ENCODE measurements at regions of chr1 and their contacts with region 1.

Region 1: DNA sequence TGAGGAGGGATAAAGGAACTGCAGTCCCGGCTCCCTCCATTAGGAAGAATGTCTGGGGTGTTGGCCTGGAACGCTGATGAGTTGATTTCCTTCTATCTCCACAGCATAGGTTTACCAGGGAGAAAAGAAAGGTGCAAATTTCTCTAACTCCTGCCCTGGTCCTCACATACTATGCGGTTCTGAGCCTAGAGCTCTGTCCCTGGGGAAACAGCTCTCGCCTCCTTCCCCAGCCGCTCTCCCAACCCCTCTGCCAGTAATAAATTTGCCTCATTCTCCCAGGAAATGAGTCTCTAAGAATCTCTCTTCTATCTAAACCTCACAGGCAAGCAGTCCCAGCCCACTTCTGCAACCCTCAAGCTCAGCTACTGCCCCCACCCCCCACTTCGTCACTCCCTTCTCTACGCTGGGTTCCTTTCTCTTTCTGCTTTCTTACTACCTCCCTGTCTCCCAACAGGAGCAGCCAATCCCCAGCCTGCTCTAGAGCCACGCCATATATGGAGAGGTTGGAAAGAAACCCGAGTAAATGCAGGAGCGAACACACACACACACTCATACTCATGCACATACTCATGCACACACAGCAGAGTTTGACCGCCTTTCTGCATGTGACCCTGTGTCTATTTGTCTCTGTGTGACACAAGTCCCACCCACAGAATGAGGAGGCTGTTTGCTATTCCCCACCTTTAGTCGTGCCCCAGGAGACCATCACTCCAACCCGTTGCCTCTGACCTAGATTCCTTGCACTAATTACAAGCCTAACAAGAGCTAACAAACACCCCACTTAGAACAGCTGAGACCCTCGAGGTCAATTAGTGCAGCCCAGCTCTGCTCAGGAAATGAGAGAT is 13.4 kb downstream of the PLEKHO1 start:
- DNase-seq: peak; percentile 34
- ATAC-seq: peak; percentile 28
- H3K4me3 Mint-ChIP-seq: peak overlapping the region; percentile 81
- H3K27ac Mint-ChIP-seq: peak overlapping the region; percentile 98
- H3K4me1 Mint-ChIP-seq: peaks cover 86% of the 10 kb centered on the region
- H3K27me3 Mint-ChIP-seq: no peaks in the 10 kb centered on the region
- CTCF ChIP-seq: no peak

Region 2: GRCh38 chr1:149899460-149900293 is 263.4 kb before region 1 on chr1 and contains the start of gene BOLA1:
- CTCF ChIA-PET with region 1: no interaction called
- POLR2A ChIA-PET with region 1: no interaction called
- intact Hi-C with region 1: loop called (anchors 10 kb)
- DNase-seq: peak; percentile 69
- ATAC-seq: peak; percentile 99
- H3K4me3 Mint-ChIP-seq: peak within 1 kb of the TSS; percentile 92
- H3K27ac Mint-ChIP-seq: peak within 1 kb of the TSS; percentile 86
- H3K4me1 Mint-ChIP-seq: peaks cover 20% of the 10 kb centered on the region
- H3K27me3 Mint-ChIP-seq: no peaks in the 10 kb centered on the region
- CTCF ChIP-seq: no peak
- total RNA-seq, gene BOLA1: 10.2 and 11.6 TPM in 2 replicates

Region 3: GRCh38 chr1:150067184-150068036 is 95.7 kb before region 1 on chr1 and contains the start of gene VPS45:
- CTCF ChIA-PET with region 1: interaction called, 166 read pairs
- POLR2A ChIA-PET with region 1: interaction called, 38 read pairs
- intact Hi-C with region 1: loop called (anchors 2 kb)
- DNase-seq: peak; percentile 71
- ATAC-seq: peak; percentile 86
- H3K4me3 Mint-ChIP-seq: peak within 1 kb of the TSS; percentile 95
- H3K27ac Mint-ChIP-seq: peak within 1 kb of the TSS; percentile 95
- H3K4me1 Mint-ChIP-seq: peaks cover 31% of the 10 kb centered on the region
- H3K27me3 Mint-ChIP-seq: no peaks in the 10 kb centered on the region
- CTCF ChIP-seq: no peak
- total RNA-seq, gene VPS45: 39.0 and 46.0 TPM in 2 replicates

Region 4: DNA sequence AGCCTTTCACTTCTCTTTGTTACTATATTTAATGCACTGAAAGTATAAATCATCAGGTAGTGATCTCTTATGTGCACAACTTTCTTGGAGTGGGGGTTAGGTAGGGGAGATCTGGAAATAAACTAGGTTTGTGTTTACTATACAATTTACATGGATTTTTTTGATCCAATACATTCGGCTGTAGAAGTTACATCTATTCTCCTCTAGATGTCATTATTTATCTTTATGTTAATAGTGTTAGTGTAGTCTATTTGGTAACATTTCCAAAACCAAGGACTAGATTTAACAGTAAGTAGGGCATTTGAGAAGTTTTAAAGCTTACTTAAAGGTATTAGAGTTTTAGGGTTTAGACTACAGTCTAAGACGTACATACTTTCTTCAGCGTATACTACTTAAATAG is 90.1 kb before region 1 on chr1:
- CTCF ChIA-PET with region 1: interaction called, 166 read pairs
- POLR2A ChIA-PET with region 1: interaction called, 38 read pairs
- intact Hi-C with region 1: no loop called
- DNase-seq: no peak
- ATAC-seq: peak; percentile 69
- H3K4me3 Mint-ChIP-seq: no peak overlapping the region
- H3K27ac Mint-ChIP-seq: peak overlapping the region; percentile 5
- H3K4me1 Mint-ChIP-seq: peaks cover 39% of the 10 kb centered on the region
- H3K27me3 Mint-ChIP-seq: no peaks in the 10 kb centered on the region
- CTCF ChIP-seq: no peak

Region 5: GRCh38 chr1:150194381-150195031 is 31.4 kb after region 1 on chr1:
- CTCF ChIA-PET with region 1: no interaction called
- POLR2A ChIA-PET with region 1: no interaction called
- intact Hi-C with region 1: no loop called
- DNase-seq: no peak
- ATAC-seq: no peak
- H3K4me3 Mint-ChIP-seq: no peak overlapping the region
- H3K27ac Mint-ChIP-seq: no peak overlapping the region
- H3K4me1 Mint-ChIP-seq: no peaks in the 10 kb centered on the region
- H3K27me3 Mint-ChIP-seq: peaks cover 6% of the 10 kb centered on the region
- CTCF ChIP-seq: no peak

Region 6: GRCh38 chr1:151273925-151274466 is 1110.9 kb after region 1 on chr1:
- CTCF ChIA-PET with region 1: no interaction called
- POLR2A ChIA-PET with region 1: no interaction called
- intact Hi-C with region 1: no loop called
- DNase-seq: no peak
- ATAC-seq: no peak
- H3K4me3 Mint-ChIP-seq: no peak overlapping the region
- H3K27ac Mint-ChIP-seq: no peak overlapping the region
- H3K4me1 Mint-ChIP-seq: peaks cover 32% of the 10 kb centered on the region
- H3K27me3 Mint-ChIP-seq: no peaks in the 10 kb centered on the region
- CTCF ChIP-seq: no peak